Activated CD4-positive, alpha-beta memory T cell treated with anti-CD3 and anti-CD28 coated beads, Interleukin-2, amount 10 ng/mL, durations not matched to agents 7 days and 5 days (primary cell): ENCODE measurements at regions of chr10 and their contacts with region 1.

Region 1: GRCh38 chr10:8059959-8060703 is 5.6 kb downstream of the GATA3 start:
- DNase-seq: peak; percentile 83
- H3K4me3 Mint-ChIP-seq: peak overlapping the region; percentile 92
- H3K27ac Mint-ChIP-seq: peak overlapping the region; percentile 99
- H3K4me1 Mint-ChIP-seq: peaks cover 77% of the 10 kb centered on the region
- H3K27me3 Mint-ChIP-seq: no peaks in the 10 kb centered on the region

Region 2: GRCh38 chr10:8121201-8121890 is 61.2 kb after region 1 on chr10:
- CTCF ChIA-PET with region 1: no interaction called
- POLR2A ChIA-PET with region 1: no interaction called
- DNase-seq: no peak
- H3K4me3 Mint-ChIP-seq: no peak overlapping the region
- H3K27ac Mint-ChIP-seq: no peak overlapping the region
- H3K4me1 Mint-ChIP-seq: no peaks in the 10 kb centered on the region
- H3K27me3 Mint-ChIP-seq: no peaks in the 10 kb centered on the region

Region 3: GRCh38 chr10:8133146-8133545 is 73.0 kb after region 1 on chr10:
- CTCF ChIA-PET with region 1: interaction called, 8 read pairs
- POLR2A ChIA-PET with region 1: interaction called, 121 read pairs
- DNase-seq: peak; percentile 70
- H3K4me3 Mint-ChIP-seq: peak overlapping the region; percentile 65
- H3K27ac Mint-ChIP-seq: peak overlapping the region; percentile 86
- H3K4me1 Mint-ChIP-seq: peaks cover 78% of the 10 kb centered on the region
- H3K27me3 Mint-ChIP-seq: no peaks in the 10 kb centered on the region

Region 4: DNA sequence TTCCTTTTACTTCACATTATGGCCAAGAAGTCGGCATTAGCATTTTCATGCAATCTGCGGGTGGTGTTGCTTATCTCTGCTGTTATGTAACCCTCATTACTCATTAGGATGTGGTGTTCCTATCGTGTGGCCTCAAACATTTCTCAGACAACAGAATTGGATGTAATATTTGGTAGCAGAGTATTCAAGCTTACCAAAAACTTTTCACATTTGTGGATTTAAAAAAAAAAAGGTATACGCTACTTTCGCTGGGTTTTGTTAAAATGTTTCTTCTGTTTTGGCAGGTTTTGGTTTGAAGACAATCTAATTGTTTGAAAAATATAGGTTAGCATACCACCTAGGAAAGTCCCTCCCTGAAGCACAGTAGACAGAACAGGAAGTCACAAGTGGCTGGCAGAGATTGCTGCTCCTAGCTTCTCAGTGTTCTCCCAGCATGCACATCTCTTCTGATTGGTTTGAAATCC is 123.1 kb after region 1 on chr10:
- CTCF ChIA-PET with region 1: no interaction called
- POLR2A ChIA-PET with region 1: interaction called, 14 read pairs
- DNase-seq: peak; percentile 29
- H3K4me3 Mint-ChIP-seq: no peak overlapping the region
- H3K27ac Mint-ChIP-seq: peak overlapping the region; percentile 1
- H3K4me1 Mint-ChIP-seq: peaks cover 23% of the 10 kb centered on the region
- H3K27me3 Mint-ChIP-seq: no peaks in the 10 kb centered on the region

Region 5: DNA sequence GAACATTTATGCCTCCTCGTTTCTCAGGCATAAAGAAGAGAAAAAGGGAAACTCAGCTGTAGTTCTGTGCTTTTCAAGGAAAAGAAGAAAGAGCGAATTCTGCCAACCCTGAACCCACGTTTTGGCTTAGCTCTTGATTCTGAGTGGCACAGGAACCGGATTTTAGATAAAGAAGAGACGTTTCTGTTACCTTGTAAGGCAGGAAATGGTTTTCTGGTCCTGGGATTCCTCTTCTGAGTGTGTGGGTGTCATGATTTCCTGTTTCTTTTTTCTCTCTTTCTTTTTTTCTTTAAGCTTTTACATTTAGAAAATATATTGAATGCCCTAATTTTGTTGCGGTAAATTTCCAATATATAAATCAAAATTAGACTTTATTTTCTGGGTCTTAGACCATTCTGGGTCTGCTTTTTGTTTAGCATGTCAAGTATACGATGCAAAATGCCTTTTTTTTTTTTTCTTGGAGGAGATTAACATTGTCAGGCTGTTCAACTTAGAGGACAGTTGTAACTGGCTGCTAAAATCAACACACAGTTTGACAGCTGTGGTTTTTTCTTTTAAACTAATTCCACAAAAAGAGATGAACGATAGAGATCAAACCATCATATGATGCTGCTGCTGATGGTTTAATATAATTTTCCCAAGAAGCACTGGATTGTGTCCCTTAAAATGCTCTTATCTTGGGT is 185.1 kb after region 1 on chr10:
- CTCF ChIA-PET with region 1: no interaction called
- POLR2A ChIA-PET with region 1: interaction called, 10 read pairs
- DNase-seq: no peak
- H3K4me3 Mint-ChIP-seq: peak overlapping the region; percentile 64
- H3K27ac Mint-ChIP-seq: peak overlapping the region; percentile 94
- H3K4me1 Mint-ChIP-seq: peaks cover 76% of the 10 kb centered on the region
- H3K27me3 Mint-ChIP-seq: no peaks in the 10 kb centered on the region

Region 6: DNA sequence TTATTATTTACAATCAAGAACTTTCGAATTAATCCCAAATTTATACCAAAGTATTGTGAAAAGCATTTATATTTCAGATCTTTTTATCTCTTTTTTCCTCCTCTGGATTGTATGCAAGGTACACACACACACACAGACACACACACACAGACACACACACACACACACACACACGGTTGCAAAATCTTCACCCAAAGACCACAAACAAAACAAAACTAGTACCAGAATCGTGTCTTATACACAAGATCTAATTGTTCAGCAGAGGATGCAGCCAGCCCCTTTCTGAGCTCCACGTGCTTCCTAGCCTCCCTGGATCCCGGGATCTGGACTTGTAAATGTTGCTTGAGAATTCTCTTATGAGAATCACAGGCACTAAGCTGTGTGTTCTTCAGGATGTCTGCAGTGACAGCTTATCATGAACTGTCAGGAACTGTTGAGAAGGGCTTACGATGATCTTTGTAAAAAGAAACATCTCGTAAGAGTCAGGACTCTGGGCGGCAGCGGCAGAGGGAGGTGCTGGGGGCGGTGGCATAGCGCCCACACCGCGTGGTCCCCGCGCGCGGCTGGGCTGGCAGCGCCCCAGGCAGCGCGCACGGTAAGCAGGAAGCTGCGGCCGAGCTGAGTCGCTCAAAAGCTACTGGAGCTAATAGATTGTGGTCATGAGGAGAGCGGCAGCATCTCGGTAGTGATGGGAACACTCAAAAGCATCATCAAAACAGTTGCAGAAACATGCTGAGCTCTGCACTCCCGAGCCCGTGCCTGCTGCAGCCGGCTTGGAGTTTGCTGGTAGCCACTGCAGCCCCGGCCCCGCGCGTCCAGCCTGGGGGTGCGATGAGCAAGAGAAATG is 272.0 kb after region 1 on chr10:
- CTCF ChIA-PET with region 1: interaction called, 5 read pairs
- POLR2A ChIA-PET with region 1: interaction called, 84 read pairs
- DNase-seq: peak; percentile 95
- H3K4me3 Mint-ChIP-seq: peak overlapping the region; percentile 85
- H3K27ac Mint-ChIP-seq: peak overlapping the region; percentile 95
- H3K4me1 Mint-ChIP-seq: peaks cover 81% of the 10 kb centered on the region
- H3K27me3 Mint-ChIP-seq: no peaks in the 10 kb centered on the region

Region 7: DNA sequence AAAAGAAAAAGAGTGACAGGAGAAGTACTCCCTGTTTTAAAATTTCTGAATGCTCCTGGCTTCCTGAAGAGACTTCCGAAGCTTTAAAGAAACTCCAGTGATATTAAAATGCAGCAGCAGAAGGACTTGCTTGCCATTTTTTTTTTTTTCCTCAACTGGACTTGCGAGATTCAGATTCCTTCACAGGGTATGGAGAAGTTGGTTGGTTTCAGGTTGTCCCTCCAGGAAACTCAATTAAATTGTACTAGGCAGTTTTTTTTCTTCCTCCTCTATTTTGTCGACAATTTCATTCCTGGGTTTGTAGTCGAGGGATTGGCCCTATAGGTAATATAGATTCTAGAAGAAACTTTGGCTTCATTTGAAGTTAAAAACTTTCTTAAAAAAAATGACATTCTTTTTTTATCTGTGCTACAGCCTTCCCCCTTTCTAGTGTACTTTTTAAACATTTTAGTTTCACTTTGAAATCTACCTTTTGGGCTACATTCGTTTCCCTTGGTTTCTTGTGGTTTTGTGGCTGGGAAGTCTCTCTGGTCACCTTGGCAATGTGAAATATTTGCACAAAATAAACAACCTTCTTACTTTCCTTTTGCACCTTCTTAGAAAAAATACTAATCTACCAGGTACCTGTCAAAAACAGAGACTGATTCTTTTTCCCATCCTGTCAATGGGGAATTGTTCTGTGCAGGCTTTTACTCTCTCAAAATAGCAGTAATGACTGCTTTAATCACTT is 344.4 kb after region 1 on chr10:
- CTCF ChIA-PET with region 1: interaction called, 7 read pairs
- POLR2A ChIA-PET with region 1: interaction called, 58 read pairs
- DNase-seq: peak; percentile 71
- H3K4me3 Mint-ChIP-seq: peak overlapping the region; percentile 57
- H3K27ac Mint-ChIP-seq: peak overlapping the region; percentile 89
- H3K4me1 Mint-ChIP-seq: peaks cover 80% of the 10 kb centered on the region
- H3K27me3 Mint-ChIP-seq: no peaks in the 10 kb centered on the region